Activated T-helper 1 cell treated with anti-CD3 and anti-CD28 coated beads, Interleukin-12 subunit alpha, Interleukin-12 subunit beta, Interleukin-2, Interleukin-4 antibody, amounts not matched to agents 30 ng/mL and 10 ng/mL and 1 ng/mL, durations not matched to agents 14 hours and 24 hours and 36 hours (primary cell): ENCODE measurements at regions of chr2 and their contacts with region 1.

Region 1: GRCh38 chr2:201071479-201072200 is at the starts of genes HYCC2 and NDUFB3:
- DNase-seq: peak; percentile 90
- H3K4me3 Mint-ChIP-seq: peak within 1 kb of the TSS; percentile 90
- H3K27ac Mint-ChIP-seq: peak within 1 kb of the TSS; percentile 95
- H3K4me1 Mint-ChIP-seq: peaks cover 49% of the 10 kb centered on the region
- H3K27me3 Mint-ChIP-seq: no peaks in the 10 kb centered on the region
- total RNA-seq, gene HYCC2: 26.1 and 29.4 TPM in 2 replicates
- total RNA-seq, gene NDUFB3: 105 and 121 TPM in 2 replicates

Region 2: GRCh38 chr2:200901459-200902072 is 170.1 kb before region 1 on chr2:
- intact Hi-C with region 1: loop called (anchors 1 kb)
- DNase-seq: peak; percentile 68
- H3K4me3 Mint-ChIP-seq: no peak overlapping the region
- H3K27ac Mint-ChIP-seq: peak overlapping the region; percentile 59
- H3K4me1 Mint-ChIP-seq: peaks cover 18% of the 10 kb centered on the region
- H3K27me3 Mint-ChIP-seq: no peaks in the 10 kb centered on the region

Region 3: GRCh38 chr2:200963124-200963917 is 108.3 kb before region 1 on chr2 and contains the start of gene ORC2:
- intact Hi-C with region 1: loop called (anchors 1 kb)
- DNase-seq: peak; percentile 93
- H3K4me3 Mint-ChIP-seq: peak within 1 kb of the TSS; percentile 97
- H3K27ac Mint-ChIP-seq: peak within 1 kb of the TSS; percentile 93
- H3K4me1 Mint-ChIP-seq: peaks cover 58% of the 10 kb centered on the region
- H3K27me3 Mint-ChIP-seq: no peaks in the 10 kb centered on the region
- total RNA-seq, gene ORC2: 63.1 and 63.3 TPM in 2 replicates

Region 4: GRCh38 chr2:201130524-201131186 is 59.0 kb after region 1 on chr2:
- intact Hi-C with region 1: loop called (anchors 1 kb)
- DNase-seq: peak; percentile 45
- H3K4me3 Mint-ChIP-seq: peak overlapping the region; percentile 90
- H3K27ac Mint-ChIP-seq: peak overlapping the region; percentile 99
- H3K4me1 Mint-ChIP-seq: peaks cover 56% of the 10 kb centered on the region
- H3K27me3 Mint-ChIP-seq: no peaks in the 10 kb centered on the region